ENCODE measurements at regions of chr6 and their contacts with region 1.

Region 1: GRCh38 chr6:27838058-27838944 is 73.9 kb downstream of the OR2B2 start:
- DNase-seq: peak; percentile 88
- H3K4me3 Mint-ChIP-seq: no peak overlapping the region
- H3K27ac Mint-ChIP-seq: no peak overlapping the region
- H3K4me1 Mint-ChIP-seq: peaks cover 22% of the 10 kb centered on the region
- H3K27me3 Mint-ChIP-seq: peaks cover 6% of the 10 kb centered on the region

Region 2: DNA sequence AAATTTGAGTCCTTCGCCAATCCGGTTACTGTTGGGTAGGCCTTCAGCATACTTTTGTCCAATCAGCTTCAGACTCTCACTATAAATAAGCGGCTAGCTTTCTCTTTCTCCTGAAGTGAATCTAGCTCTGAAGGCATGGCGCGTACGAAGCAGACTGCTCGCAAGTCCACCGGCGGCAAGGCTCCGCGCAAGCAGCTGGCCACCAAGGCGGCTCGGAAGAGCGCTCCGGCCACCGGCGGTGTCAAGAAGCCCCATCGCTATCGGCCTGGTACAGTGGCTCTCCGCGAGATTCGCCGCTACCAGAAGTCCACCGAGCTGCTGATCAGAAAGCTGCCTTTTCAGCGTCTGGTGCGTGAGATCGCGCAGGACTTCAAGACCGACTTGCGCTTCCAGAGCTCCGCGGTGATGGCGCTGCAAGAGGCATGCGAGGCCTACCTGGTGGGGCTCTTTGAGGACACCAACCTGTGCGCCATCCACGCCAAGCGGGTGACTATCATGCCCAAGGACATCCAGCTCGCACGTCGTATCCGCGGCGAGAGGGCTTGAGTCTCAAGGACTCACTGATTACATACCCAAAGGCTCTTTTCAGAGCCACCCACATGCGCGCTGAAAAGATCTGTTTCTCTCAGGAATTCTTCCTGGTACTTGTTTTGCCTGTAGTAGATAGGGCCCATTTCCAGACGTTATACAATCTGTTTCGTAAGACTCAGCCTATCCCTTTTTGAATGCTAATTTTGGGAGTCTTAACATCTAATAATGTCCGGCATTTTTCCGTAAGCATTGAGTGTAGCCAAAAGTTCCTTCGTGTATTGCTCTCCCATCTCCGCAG is 28.1 kb before region 1 on chr6:
- CTCF ChIA-PET with region 1: interaction called, 8 read pairs
- POLR2A ChIA-PET with region 1: interaction called, 165 read pairs
- intact Hi-C with region 1: loop called (anchors 1 kb)
- DNase-seq: peak; percentile 82
- H3K4me3 Mint-ChIP-seq: peak overlapping the region; percentile 85
- H3K27ac Mint-ChIP-seq: peak overlapping the region; percentile 96
- H3K4me1 Mint-ChIP-seq: peaks cover 61% of the 10 kb centered on the region
- H3K27me3 Mint-ChIP-seq: peaks cover 4% of the 10 kb centered on the region

Region 3: GRCh38 chr6:27864906-27865849 is 26.9 kb after region 1 on chr6:
- CTCF ChIA-PET with region 1: interaction called, 35 read pairs
- POLR2A ChIA-PET with region 1: interaction called, 429 read pairs
- intact Hi-C with region 1: loop called (anchors 1 kb)
- DNase-seq: peak; percentile 85
- H3K4me3 Mint-ChIP-seq: peak overlapping the region; percentile 96
- H3K27ac Mint-ChIP-seq: peak overlapping the region; percentile 100
- H3K4me1 Mint-ChIP-seq: peaks cover 38% of the 10 kb centered on the region
- H3K27me3 Mint-ChIP-seq: peaks cover 20% of the 10 kb centered on the region

Region 4: DNA sequence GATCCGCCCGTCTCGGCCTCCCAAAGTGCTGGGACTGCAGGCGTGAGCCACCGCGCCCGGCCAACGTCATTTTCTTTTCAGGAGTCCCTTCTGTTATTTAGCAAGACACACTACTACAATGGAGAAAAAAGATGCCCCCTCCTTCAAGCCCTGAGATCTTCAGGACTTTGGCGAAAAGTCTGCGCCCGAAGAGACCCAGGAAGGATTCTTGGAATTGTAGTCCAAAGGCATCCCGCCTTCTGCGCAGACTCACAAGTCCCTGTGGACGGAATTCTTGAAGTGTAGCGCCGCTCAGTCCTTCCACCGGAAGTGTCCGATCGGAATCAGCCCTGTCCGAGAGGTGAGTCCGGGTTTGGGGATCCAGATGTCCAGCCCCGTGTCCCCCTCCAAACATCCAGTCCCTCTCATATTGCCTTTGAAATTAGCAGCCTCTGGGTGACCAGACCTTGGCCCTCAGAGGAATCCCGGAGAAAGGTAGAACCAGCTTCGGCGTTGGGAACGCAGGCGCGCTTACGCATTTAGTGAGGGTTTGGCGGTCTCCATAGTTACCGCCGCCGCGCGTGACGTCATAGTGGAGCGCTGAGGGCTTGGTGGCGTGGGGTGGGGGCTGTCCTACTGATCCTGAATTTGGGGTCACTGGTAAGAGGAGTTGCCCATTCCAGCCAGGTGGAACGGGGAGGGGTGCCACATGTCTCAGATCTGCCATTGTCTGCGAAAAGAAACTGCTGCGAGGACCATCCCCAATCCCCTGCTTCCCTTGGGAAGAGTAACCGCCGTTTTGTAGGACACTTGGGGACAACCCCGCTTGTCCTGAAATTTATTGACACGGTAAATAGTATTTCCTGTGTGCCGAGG is 242.6 kb after region 1 on chr6:
- CTCF ChIA-PET with region 1: no interaction called
- POLR2A ChIA-PET with region 1: no interaction called
- intact Hi-C with region 1: loop called (anchors 2 kb)
- DNase-seq: peak; percentile 92
- H3K4me3 Mint-ChIP-seq: peak overlapping the region; percentile 96
- H3K27ac Mint-ChIP-seq: peak overlapping the region; percentile 97
- H3K4me1 Mint-ChIP-seq: peaks cover 20% of the 10 kb centered on the region
- H3K27me3 Mint-ChIP-seq: no peaks in the 10 kb centered on the region

Measured in activated CD4-positive, alpha-beta memory T cell treated with anti-CD3 and anti-CD28 coated beads for 36 hours (primary cell).